GM10248 (cell line): ENCODE measurements at regions of chr11 and their contacts with region 1.

Region 1: GRCh38 chr11:72030472-72031045 is 31.9 kb downstream of the IL18BP start:
- DNase-seq: no peak
- CTCF ChIP-seq: no peak

Region 2: GRCh38 chr11:72015511-72016171 is 14.9 kb before region 1 on chr11:
- CTCF ChIA-PET with region 1: interaction called, 159 read pairs
- POLR2A ChIA-PET with region 1: no interaction called
- DNase-seq: no peak
- CTCF ChIP-seq: peak; percentile 71

Region 3: DNA sequence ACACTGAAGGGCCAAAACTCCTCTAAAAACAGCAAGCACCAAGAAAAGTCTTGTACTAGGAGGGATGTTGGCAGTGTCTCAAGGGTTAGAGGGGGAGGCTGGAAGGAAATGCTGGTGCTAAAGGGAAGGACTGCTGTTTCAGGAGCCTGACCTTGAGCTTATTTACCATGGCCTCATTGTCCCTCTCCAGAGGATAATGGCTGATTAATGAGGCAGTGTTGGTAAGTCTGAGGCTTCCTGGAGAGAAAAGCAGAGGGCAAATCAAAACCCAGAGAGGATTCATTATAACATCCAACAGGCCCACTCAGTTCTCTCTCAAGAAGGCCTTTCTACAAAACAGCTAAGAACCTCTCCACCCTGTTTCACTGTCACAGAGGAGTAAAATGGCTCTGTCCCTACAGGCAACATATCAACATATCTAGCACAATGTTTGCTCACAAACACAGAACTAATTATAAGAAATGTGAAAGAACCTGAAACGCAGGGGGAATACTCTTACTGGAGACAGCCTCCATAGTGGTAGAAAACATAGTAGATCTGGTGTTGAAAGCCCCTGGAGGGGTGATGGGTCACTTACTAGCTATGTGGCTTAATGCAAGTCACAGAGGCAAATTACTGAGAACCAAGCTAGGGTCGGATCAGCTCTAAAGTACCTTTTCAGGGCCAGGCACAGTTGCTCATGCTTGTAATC is 18.4 kb after region 1 on chr11:
- CTCF ChIA-PET with region 1: interaction called, 159 read pairs
- POLR2A ChIA-PET with region 1: no interaction called
- DNase-seq: no peak
- CTCF ChIP-seq: no peak

Region 4: DNA sequence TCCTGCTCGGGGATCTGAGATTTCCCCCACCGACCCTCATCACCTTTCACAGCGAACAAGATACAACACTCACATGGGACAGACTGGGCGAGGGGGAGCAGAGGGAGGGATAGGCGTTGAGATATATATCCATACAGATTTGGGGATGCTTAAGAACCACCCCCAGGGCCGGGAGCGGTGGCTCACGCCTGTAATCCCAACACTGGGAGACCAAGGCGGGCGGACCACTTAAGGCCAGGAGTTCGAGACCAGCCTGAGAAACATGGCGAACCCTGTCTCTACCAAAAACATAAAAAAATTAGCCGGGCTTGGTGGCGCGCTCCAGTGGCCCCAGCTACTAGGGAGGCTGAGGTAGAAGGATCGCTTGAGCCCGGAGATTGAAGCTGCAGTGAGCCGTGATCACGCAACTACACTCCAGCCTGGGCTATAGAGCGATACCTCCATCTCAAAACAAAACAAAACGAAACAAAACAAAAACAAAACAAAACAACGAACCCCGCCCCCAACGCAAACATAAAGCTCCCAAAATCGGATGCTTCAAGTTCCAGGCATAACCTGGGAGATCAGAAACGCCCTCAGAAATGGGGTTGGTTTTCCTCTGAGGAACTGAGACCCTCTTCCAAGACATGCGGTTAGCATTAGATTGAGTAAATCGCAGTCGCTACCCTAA is 50.6 kb after region 1 on chr11:
- CTCF ChIA-PET with region 1: interaction called, 49 read pairs
- POLR2A ChIA-PET with region 1: interaction called, 3 read pairs
- DNase-seq: no peak
- CTCF ChIP-seq: no peak

Region 5: DNA sequence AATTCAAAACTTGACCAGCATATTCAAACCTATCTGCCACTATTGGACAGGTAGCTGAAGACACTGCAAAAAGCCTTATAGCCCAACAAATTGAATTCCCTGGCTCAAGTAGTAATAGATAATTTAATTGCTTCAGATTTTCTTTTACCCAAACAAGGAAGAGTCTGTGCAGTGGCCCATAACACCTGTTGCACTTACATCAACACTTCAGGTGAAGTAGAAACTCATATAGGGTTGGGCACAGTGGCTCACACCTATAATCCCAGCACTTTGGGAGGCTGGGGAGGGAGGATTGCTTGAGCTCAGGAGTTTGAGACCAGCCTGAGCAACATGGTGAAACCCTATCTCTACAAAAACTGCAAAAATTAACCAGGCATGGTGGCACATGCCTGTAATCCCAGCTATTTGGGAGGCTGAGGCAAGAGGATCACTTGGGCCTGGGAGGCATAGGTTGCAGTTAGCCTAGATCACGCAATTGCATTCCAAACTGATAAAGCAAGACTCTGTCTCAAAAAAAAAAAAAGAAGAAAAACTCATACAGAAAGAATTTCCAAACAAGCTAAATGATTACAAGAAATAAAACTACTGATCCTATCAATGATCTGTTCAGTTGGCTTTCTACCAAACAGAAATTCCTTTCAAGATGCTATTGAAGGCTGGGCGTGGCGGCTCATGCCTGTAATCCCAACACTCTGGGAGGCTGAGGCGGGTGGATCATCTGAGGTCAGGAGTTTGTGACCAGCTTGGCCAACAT is 114.4 kb after region 1 on chr11:
- CTCF ChIA-PET with region 1: interaction called, 98 read pairs
- POLR2A ChIA-PET with region 1: no interaction called
- DNase-seq: no peak
- CTCF ChIP-seq: no peak

Region 6: GRCh38 chr11:72238040-72238450 is 207.5 kb after region 1 on chr11:
- CTCF ChIA-PET with region 1: interaction called, 16 read pairs
- POLR2A ChIA-PET with region 1: no interaction called
- DNase-seq: peak; percentile 85
- CTCF ChIP-seq: peak; percentile 79